Mammary epithelial cell (primary cell): ENCODE measurements at regions of chr4 and their contacts with region 1.

Region 1: GRCh38 chr4:76896731-76897535 is 1.0 kb downstream of the SOWAHB start:
- DNase-seq: peak; percentile 48
- H3K4me3 ChIP-seq: peak overlapping the region; percentile 63 to 74 (median 70)
- H3K27ac ChIP-seq: no peak overlapping the region
- H3K4me1 ChIP-seq: peaks cover 33% of the 10 kb centered on the region
- H3K27me3 ChIP-seq: no peaks in the 10 kb centered on the region
- CTCF ChIP-seq: no peak

Region 2: DNA sequence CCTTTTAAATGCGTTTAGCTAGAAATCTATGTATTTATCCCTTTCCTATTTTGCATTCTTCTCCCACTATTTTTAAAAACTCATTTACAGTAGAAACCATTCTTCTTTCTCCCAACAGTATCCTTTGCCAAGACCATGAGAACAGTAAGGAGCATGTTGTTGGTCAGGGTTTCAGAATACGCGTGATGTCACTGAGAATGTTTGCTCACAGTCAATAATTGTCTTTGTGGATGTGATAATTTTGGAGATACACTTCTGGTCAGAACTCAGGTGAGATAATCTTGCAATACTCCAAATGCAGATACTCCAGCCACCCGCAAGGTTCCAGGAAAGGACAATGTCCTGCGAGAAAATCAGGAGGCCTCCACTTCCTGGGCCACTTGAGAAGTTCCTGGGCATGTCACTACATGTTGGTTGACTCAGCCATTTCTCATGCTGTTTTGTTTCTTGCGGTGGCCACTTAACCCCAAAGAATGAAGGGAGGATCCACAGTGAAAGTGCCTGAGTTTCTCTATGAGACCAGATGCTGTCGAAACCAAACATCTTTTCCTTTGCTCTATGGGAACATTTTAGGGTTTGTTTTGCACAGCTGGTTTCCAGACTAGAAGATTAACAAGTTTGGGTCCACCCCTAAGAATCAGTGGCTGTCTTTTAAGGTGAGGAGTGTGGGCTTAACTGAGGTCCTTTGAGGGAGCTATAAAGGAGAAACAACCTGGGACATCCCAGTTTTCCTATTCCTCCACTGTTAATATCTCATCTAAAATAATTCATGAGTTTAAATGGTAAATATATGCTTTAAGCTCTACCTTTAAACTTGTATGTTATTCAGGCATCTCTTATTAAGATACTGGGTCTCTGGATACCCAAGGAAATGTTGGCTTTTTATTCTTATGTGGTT is 115.0 kb before region 1 on chr4:
- CTCF ChIA-PET with region 1: no interaction called
- dilution Hi-C with region 1: no loop called
- in situ Hi-C with region 1: no loop called
- intact Hi-C with region 1: loop called (anchors 2 kb)
- DNase-seq: peak; percentile 100
- H3K4me3 ChIP-seq: peak overlapping the region; percentile 23 to 52 (median 32)
- H3K27ac ChIP-seq: peak overlapping the region; percentile 100
- H3K4me1 ChIP-seq: peaks cover 33% of the 10 kb centered on the region
- H3K27me3 ChIP-seq: no peaks in the 10 kb centered on the region
- CTCF ChIP-seq: no peak

Region 3: GRCh38 chr4:76931087-76931486 is 34.2 kb after region 1 on chr4:
- CTCF ChIA-PET with region 1: no interaction called
- dilution Hi-C with region 1: no loop called
- in situ Hi-C with region 1: no loop called
- intact Hi-C with region 1: loop called (anchors 2 kb)
- DNase-seq: peak; percentile 92
- H3K4me3 ChIP-seq: no peak overlapping the region
- H3K27ac ChIP-seq: no peak overlapping the region
- H3K4me1 ChIP-seq: peaks cover 15% of the 10 kb centered on the region
- H3K27me3 ChIP-seq: no peaks in the 10 kb centered on the region
- CTCF ChIP-seq: no peak

Region 4: GRCh38 chr4:76984127-76984526 is 87.2 kb after region 1 on chr4:
- CTCF ChIA-PET with region 1: no interaction called
- dilution Hi-C with region 1: no loop called
- in situ Hi-C with region 1: no loop called
- intact Hi-C with region 1: loop called (anchors 1 kb)
- DNase-seq: peak; percentile 24
- H3K4me3 ChIP-seq: no peak overlapping the region
- H3K27ac ChIP-seq: peak overlapping the region; percentile 6
- H3K4me1 ChIP-seq: peaks cover 21% of the 10 kb centered on the region
- H3K27me3 ChIP-seq: no peaks in the 10 kb centered on the region
- CTCF ChIP-seq: peak; percentile 16 to 45